GM10248 (cell line): ENCODE measurements at regions of chr14 and their contacts with region 1.

Region 1: GRCh38 chr14:20421267-20421666 is 8.0 kb upstream of the TEP1 start:
- DNase-seq: no peak
- CTCF ChIP-seq: no peak

Region 2: GRCh38 chr14:20440882-20441281 is 19.6 kb after region 1 on chr14:
- CTCF ChIA-PET with region 1: interaction called, 13 read pairs
- POLR2A ChIA-PET with region 1: no interaction called
- DNase-seq: no peak
- CTCF ChIP-seq: no peak

Region 3: DNA sequence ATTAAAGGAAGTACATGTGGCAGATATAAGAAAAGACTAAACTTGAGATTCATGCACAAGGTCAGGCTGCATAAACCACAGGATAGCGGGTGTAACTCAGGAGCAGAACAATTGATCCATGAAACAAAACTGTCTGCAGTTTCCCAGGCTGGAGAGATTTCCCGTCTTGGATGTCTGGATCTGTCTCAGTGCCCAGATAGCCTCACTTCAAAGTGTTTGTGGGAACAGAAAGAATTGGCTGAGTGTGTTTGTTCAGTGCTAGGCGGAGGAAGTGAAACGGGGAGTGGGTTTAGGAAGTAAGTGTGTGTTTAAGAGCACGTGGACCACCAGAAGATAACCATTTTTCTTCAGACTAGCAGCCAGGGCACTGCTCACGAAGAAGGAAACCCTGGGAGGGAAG is 82.6 kb after region 1 on chr14:
- CTCF ChIA-PET with region 1: no interaction called
- POLR2A ChIA-PET with region 1: no interaction called
- DNase-seq: no peak
- CTCF ChIP-seq: no peak

Region 4: GRCh38 chr14:22303589-22304195 is 1882.4 kb after region 1 on chr14:
- CTCF ChIA-PET with region 1: no interaction called
- POLR2A ChIA-PET with region 1: no interaction called
- DNase-seq: no peak
- CTCF ChIP-seq: peak; percentile 36